Sciatic nerve (tissue), 2 donors: ENCODE measurements at regions of chr17 and their contacts with region 1.

Region 1: DNA sequence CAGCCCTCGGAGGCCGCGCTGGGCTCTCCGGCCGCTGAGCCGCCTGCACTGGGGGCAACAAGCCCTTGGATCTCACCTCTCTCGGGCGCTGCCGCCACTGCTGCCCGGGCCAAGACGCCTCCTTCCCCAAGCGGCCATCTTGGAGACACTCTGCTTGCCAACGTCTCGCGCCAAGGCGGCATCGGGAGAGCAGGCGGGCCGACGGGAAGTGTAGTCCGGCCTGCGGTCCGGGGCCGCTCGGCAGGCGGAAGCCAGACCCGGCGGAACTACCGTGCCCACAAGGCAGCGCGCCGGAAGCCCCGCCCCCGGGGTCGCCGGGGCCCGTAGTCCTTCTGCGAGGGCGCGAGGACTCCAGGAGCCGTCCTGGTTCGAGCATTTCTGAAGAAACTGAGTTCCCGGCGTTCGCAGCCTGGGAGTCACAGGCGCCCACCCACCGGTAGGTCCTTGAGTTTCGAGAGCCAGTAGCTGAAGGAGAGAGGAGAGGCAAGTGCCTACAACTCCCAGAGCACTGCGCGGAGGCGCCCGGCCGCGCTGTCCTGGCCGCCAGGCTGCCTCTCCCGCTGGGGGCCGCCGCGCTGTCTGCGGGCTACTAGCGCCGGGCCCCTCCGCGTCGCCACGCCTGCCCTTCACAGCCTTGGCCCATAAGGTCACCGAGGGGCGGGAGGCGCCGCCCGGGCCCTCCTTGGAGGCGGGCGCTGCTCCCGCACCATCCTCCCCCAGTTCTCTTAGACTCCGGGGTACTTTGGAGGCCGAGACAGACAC is at the start of gene TMEM11:
- DNase-seq: peak; percentile 97
- ATAC-seq: peak; percentile 99
- total RNA-seq, gene TMEM11: 16.6 TPM

Region 2: GRCh38 chr17:21126645-21127510 is 87.3 kb before region 1 on chr17 and contains the start of gene DHRS7B:
- intact Hi-C with region 1: loop called (anchors 10 kb)
- DNase-seq: peak; percentile 98
- ATAC-seq: peak; percentile 99
- total RNA-seq, gene DHRS7B: 17.1 TPM

Region 3: GRCh38 chr17:21171309-21171922 is 42.8 kb before region 1 on chr17:
- intact Hi-C with region 1: no loop called
- DNase-seq: no peak
- ATAC-seq: no peak

Region 4: DNA sequence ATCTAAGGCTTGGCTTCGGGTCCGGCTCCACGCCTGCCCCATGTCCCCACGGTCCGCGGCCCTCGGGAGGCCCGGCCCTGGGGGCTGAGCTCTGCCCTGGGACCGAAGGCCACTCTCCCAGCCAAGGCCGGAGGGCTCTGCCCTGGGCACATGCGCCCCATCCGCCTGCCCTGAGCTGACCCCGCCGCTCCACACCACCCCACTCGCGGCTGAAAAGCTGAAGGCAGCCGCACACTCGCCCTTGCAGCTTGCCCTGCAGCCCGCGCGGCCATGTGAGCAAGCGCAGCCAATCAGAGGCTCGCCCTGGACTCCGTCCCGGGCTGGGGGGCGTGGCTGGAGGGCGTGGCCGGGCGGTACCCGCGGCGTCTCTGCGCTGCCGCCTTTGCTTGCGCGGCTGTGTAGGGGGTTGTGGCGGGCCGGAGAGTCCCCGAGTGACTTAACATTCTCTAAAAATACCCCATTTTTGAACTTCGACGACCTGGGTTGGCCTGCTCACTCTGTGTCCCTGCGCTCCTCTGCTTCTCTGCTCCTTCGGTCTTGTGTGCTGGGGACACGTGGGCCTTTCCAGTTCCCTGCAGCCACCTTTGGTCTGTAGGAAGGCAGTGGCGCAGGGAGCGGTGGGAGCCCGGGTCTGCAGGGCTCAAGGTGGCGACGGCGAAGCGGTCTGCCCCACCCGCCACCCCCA is 61.5 kb after region 1 on chr17:
- intact Hi-C with region 1: loop called (anchors 10 kb)
- DNase-seq: peak; percentile 98
- ATAC-seq: peak; percentile 98

Region 5: GRCh38 chr17:21445091-21445650 is 231.0 kb after region 1 on chr17:
- intact Hi-C with region 1: no loop called
- DNase-seq: no peak
- ATAC-seq: no peak